ENCODE measurements at regions of chr4 and their contacts with region 1.

Region 1: GRCh38 chr4:108172753-108173598 is 4.2 kb upstream of the LEF1 start:
- DNase-seq: peak; percentile 84
- ATAC-seq: peak; percentile 42
- H3K4me3 Mint-ChIP-seq: peak overlapping the region; percentile 85
- H3K27ac Mint-ChIP-seq: peak overlapping the region; percentile 95
- H3K4me1 Mint-ChIP-seq: peaks cover 53% of the 10 kb centered on the region
- H3K27me3 Mint-ChIP-seq: peaks cover 12% of the 10 kb centered on the region

Region 2: DNA sequence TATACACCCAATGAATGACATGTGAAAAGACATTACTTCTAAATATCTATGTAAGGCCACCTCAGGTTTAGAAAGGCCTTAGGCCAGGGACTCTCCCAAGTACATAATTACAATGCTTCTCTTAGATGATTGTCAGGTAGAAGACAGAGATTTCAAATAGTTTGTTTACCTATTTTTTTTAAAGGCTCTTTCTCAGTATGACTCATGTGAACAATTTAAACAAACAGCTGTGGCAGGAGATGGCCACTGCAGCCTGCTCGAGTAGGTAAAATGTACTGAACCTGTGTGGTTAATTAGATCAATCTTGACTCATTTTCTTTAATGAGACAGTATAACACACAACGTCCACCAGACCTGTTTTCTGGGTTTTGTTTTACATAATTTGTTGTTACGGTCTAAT is 54.5 kb before region 1 on chr4:
- CTCF ChIA-PET with region 1: no interaction called
- POLR2A ChIA-PET with region 1: interaction called, 14 read pairs
- intact Hi-C with region 1: no loop called
- DNase-seq: peak; percentile 53
- ATAC-seq: peak; percentile 18
- H3K4me3 Mint-ChIP-seq: peak overlapping the region; percentile 52
- H3K27ac Mint-ChIP-seq: peak overlapping the region; percentile 87
- H3K4me1 Mint-ChIP-seq: peaks cover 93% of the 10 kb centered on the region
- H3K27me3 Mint-ChIP-seq: no peaks in the 10 kb centered on the region

Region 3: GRCh38 chr4:108425988-108426387 is 253.0 kb after region 1 on chr4:
- CTCF ChIA-PET with region 1: interaction called, 4 read pairs
- POLR2A ChIA-PET with region 1: interaction called, 3 read pairs
- intact Hi-C with region 1: loop called (anchors 2 to 5 kb)
- DNase-seq: peak; percentile 13
- ATAC-seq: peak; percentile 86
- H3K4me3 Mint-ChIP-seq: no peak overlapping the region
- H3K27ac Mint-ChIP-seq: peak overlapping the region; percentile 38
- H3K4me1 Mint-ChIP-seq: peaks cover 33% of the 10 kb centered on the region
- H3K27me3 Mint-ChIP-seq: peaks cover 3% of the 10 kb centered on the region

Region 4: DNA sequence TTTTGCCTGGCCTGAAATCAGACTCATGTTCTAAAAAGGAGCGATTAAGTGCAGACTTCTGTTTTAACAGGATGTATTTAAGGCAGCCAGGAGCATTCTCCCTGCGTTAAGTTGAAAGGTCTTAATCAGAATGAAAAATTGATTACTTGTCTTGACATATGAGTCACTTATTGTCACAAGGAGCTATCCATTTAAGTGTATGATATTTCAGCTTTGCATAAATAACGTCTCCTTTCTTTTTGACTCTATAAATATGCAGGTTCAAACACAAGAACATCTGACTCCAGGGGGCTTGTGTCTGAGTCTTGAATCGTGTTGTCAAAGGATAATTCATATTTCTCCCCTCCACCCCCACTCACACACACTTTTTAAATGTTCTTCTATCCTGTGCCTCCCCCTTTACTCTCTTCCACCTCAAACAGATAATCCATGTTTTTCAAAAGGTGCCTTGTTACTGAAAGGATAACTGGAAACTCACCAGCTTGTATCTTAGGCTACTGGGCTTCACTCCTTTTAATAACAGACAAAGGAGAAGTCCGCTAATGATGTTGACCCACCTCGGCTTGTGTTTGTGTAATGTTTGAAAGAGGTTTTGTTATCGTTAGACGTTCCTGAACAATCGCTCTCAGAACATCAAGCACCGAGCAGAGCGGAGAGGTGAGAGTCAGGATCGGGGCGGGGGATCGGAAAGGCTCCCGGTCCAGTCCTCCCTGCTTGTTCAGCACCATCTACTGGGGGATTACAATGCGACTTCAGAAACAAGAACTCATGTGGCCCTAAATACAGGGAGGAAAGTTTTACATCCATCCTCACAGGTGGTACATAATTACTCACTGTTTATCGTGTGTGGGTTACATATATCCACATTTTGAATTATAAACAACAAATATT is 339.9 kb after region 1 on chr4:
- CTCF ChIA-PET with region 1: no interaction called
- POLR2A ChIA-PET with region 1: no interaction called
- intact Hi-C with region 1: loop called (anchors 2 to 5 kb)
- DNase-seq: peak; percentile 64
- ATAC-seq: peak; percentile 95
- H3K4me3 Mint-ChIP-seq: peak overlapping the region; percentile 58
- H3K27ac Mint-ChIP-seq: peak overlapping the region; percentile 2
- H3K4me1 Mint-ChIP-seq: peaks cover 18% of the 10 kb centered on the region
- H3K27me3 Mint-ChIP-seq: peaks cover 2% of the 10 kb centered on the region

Region 5: GRCh38 chr4:108620101-108620932 is 447.3 kb after region 1 on chr4 and contains the start of gene RPL34:
- CTCF ChIA-PET with region 1: no interaction called
- POLR2A ChIA-PET with region 1: no interaction called
- intact Hi-C with region 1: loop called in 1 of 2 experiments (anchors 5 kb)
- DNase-seq: peak; percentile 98
- ATAC-seq: peak; percentile 91
- H3K4me3 Mint-ChIP-seq: peak within 1 kb of the TSS; percentile 90
- H3K27ac Mint-ChIP-seq: peak within 1 kb of the TSS; percentile 98
- H3K4me1 Mint-ChIP-seq: peaks cover 47% of the 10 kb centered on the region
- H3K27me3 Mint-ChIP-seq: no peaks in the 10 kb centered on the region
- total RNA-seq, gene RPL34: 1,121 to 1,847 TPM